AG04450 (cell line): ENCODE measurements at regions of chr13 and their contacts with region 1.

Region 1: GRCh38 chr13:96065849-96066248 is 12.6 kb upstream of the UGGT2 start:
- DNase-seq: no peak
- H3K4me3 ChIP-seq: no peak overlapping the region
- H3K27ac ChIP-seq: no peak overlapping the region
- H3K27me3 ChIP-seq: peaks cover 8% of the 10 kb centered on the region
- CTCF ChIP-seq: no peak

Region 2: GRCh38 chr13:96053011-96053703 is 12.7 kb before region 1 on chr13 and contains the start of gene UGGT2:
- CTCF ChIA-PET with region 1: interaction called, 16 read pairs
- POLR2A ChIA-PET with region 1: no interaction called
- DNase-seq: peak; percentile 88
- H3K4me3 ChIP-seq: peak within 1 kb of the TSS; percentile 96
- H3K27ac ChIP-seq: peak within 1 kb of the TSS; percentile 85
- H3K27me3 ChIP-seq: no peaks in the 10 kb centered on the region
- CTCF ChIP-seq: no peak
- polyA plus RNA-seq, gene UGGT2: 21.2 and 30.5 TPM in 2 replicates